MCF 10A (cell line): ENCODE measurements at regions of chr15 and their contacts with region 1.

Region 1: GRCh38 chr15:70826634-70827033 is 27.3 kb downstream of the LARP6 start:
- DNase-seq: peak; percentile 85
- H3K4me3 Mint-ChIP-seq: no peak overlapping the region
- H3K27ac Mint-ChIP-seq: peak overlapping the region; percentile 89
- H3K4me1 Mint-ChIP-seq: peaks cover 16% of the 10 kb centered on the region
- H3K27me3 Mint-ChIP-seq: no peaks in the 10 kb centered on the region
- CTCF ChIP-seq: no peak

Region 2: DNA sequence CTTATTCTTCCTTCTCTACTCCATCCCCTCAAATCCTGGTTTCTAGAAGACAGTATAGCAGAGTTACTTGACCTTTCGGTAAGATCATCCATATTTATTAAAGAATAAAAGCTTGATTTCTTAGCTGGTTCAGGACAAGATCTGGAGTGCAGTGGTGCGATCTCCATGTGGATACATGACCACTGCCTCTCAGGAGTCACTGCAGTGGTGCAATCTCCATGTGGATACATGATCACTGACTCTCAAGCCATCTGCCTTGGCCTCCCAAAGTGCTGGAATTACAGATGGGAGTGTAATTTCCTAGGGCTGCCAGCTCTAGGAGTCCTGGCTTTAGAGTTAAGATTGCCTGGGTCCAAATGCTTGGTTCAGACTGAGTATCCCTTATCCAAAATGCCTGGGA is 10.8 kb after region 1 on chr15:
- CTCF ChIA-PET with region 1: interaction called, 10 read pairs
- POLR2A ChIA-PET with region 1: interaction called, 3 read pairs
- intact Hi-C with region 1: no loop called
- DNase-seq: no peak
- H3K4me3 Mint-ChIP-seq: no peak overlapping the region
- H3K27ac Mint-ChIP-seq: no peak overlapping the region
- H3K4me1 Mint-ChIP-seq: peaks cover 13% of the 10 kb centered on the region
- H3K27me3 Mint-ChIP-seq: no peaks in the 10 kb centered on the region
- CTCF ChIP-seq: no peak

Region 3: GRCh38 chr15:70853821-70854666 is 27.4 kb after region 1 on chr15 and contains the start of gene LARP6:
- CTCF ChIA-PET with region 1: interaction called, 30 read pairs
- POLR2A ChIA-PET with region 1: interaction called, 5 read pairs
- intact Hi-C with region 1: no loop called
- DNase-seq: peak; percentile 21
- H3K4me3 Mint-ChIP-seq: peak within 1 kb of the TSS; percentile 83
- H3K27ac Mint-ChIP-seq: peak within 1 kb of the TSS; percentile 91
- H3K4me1 Mint-ChIP-seq: peaks cover 35% of the 10 kb centered on the region
- H3K27me3 Mint-ChIP-seq: no peaks in the 10 kb centered on the region
- CTCF ChIP-seq: no peak
- total RNA-seq, gene LARP6: 67.3 and 77.5 TPM in 2 replicates

Region 4: GRCh38 chr15:70875001-70875782 is 48.6 kb after region 1 on chr15:
- CTCF ChIA-PET with region 1: interaction called, 109 read pairs
- POLR2A ChIA-PET with region 1: interaction called, 10 read pairs
- intact Hi-C with region 1: loop called (anchors 1 kb)
- DNase-seq: peak; percentile 40
- H3K4me3 Mint-ChIP-seq: no peak overlapping the region
- H3K27ac Mint-ChIP-seq: no peak overlapping the region
- H3K4me1 Mint-ChIP-seq: peaks cover 8% of the 10 kb centered on the region
- H3K27me3 Mint-ChIP-seq: no peaks in the 10 kb centered on the region
- CTCF ChIP-seq: peak; percentile 72

Region 5: DNA sequence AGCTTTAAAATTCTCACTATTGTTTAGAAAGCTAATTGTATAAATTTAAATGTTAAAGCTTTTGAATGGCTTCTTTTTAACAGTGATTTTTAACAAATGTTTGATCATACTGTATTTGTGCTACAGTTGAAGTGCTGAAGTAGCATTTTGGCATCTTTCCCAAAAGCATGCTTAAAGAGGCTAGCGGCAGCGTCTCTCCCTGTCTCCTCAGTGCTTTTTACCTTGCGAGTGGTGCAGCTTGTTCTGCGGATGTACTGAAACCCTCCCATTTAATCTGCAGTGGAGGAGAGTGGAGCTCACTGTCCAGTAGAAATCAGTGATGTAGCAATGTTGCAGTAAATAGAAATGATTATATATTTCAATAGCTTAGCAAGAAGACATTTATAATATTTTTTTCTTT is 109.7 kb after region 1 on chr15:
- CTCF ChIA-PET with region 1: no interaction called
- POLR2A ChIA-PET with region 1: no interaction called
- intact Hi-C with region 1: no loop called
- DNase-seq: no peak
- H3K4me3 Mint-ChIP-seq: no peak overlapping the region
- H3K27ac Mint-ChIP-seq: no peak overlapping the region
- H3K4me1 Mint-ChIP-seq: no peaks in the 10 kb centered on the region
- H3K27me3 Mint-ChIP-seq: no peaks in the 10 kb centered on the region
- CTCF ChIP-seq: no peak